ENCODE measurements at regions of chr14 and their contacts with region 1.

Region 1: GRCh38 chr14:68210729-68211299 is 391.2 kb downstream of the RAD51B start:
- DNase-seq: peak in 8 of 9 donors; percentile 10 to 54 (median 43)
- ATAC-seq: peak; percentile 86
- H3K4me3 ChIP-seq: peak overlapping the region; percentile 59
- H3K4me3 Mint-ChIP-seq: peak overlapping the region; percentile 75 to 90 (median 88)
- H3K27ac ChIP-seq: peak overlapping the region; percentile 23
- H3K27ac Mint-ChIP-seq: peak overlapping the region; percentile 71 to 94 (median 87)
- H3K4me1 ChIP-seq: peaks cover 28 to 33% of the 10 kb centered on the region in 2 donors
- H3K4me1 Mint-ChIP-seq: peaks cover 31 to 50% (median 38%) of the 10 kb centered on the region in 7 donors
- H3K27me3 ChIP-seq: no peaks in the 10 kb centered on the region
- H3K27me3 Mint-ChIP-seq: peaks cover 0 to 2% (median 0%) of the 10 kb centered on the region in 5 donors

Region 2: DNA sequence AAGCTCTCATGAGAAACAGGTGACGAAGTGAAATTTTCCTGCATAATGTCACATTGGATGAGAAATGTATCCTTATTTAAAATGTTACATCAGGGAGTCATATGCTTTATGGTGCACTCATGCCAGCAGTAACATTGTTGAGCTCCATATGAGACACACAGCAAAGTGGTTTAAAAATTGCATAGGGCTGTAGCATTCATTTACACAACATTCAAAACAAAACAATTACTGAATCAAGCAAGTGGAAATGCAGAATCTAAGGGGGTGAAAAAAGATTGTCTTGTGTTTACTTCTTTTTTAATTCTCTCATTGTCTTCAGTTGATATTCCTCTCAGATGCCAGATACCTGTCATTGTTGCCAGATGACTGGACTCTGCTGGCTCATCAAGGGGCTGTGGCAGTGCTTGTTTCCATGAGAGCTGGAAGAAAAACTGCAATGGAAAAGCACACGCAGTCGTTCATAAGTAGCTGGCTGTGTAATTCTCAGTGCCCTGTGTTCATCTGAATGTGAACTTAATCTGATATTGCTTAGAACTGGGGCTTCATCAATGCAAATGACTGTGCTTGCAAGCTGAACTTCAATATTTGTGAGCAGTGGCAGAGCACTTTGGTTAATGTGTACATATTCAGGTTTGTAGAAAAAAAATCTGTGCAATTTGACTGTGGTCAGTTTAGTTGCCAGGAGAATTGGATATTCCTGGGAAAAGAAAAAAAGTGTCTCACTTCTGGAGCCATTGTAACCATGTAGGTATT is 85.7 kb before region 1 on chr14:
- CTCF ChIA-PET with region 1: no interaction called
- POLR2A ChIA-PET with region 1: no interaction called
- intact Hi-C with region 1: no loop called
- DNase-seq: no peak
- ATAC-seq: no peak
- H3K4me3 ChIP-seq: no peak overlapping the region
- H3K4me3 Mint-ChIP-seq: no peak overlapping the region
- H3K27ac ChIP-seq: no peak overlapping the region
- H3K27ac Mint-ChIP-seq: no peak overlapping the region
- H3K4me1 ChIP-seq: no peaks in the 10 kb centered on the region
- H3K4me1 Mint-ChIP-seq: no peaks in the 10 kb centered on the region
- H3K27me3 ChIP-seq: no peaks in the 10 kb centered on the region
- H3K27me3 Mint-ChIP-seq: no peaks in the 10 kb centered on the region

Region 3: DNA sequence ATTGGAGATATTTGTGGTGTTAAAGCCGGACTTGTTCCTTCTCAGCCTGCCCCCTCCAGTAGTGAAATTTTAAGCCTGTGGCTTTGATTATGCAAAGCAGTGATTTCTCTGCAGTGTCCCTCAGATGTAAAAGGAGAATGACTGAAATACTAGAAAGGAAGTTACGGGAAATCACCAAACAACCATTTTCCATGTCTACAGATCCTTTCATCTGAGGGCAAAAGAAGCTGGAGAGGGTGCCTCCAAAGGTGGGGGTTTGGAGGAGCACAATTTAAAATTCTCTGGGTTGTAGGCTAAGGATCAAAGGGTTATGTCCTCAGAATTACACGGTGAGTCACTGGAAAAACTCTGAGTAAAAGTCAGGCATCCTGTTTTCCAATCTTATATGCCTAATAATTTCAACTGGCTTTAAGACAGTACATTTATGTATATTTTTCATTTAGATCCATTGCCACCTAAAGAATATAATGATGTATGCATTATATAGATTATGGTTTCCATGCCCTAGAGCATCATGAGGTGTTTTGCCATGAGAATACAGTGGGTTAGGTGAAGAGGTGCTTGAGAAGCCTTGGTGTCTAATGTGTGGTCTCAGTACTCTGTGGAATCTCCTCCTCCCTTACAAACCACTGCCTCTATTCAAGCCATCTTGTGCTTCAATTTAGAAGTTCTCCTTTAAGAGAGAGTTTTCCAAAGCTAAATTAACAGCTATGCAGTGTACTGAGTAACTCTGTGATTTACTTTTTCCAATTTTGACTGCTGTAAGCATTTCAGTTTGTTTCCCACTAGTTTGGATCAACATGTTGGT is 29.1 kb before region 1 on chr14:
- CTCF ChIA-PET with region 1: no interaction called
- POLR2A ChIA-PET with region 1: no interaction called
- intact Hi-C with region 1: loop called in 1 of 2 experiments (anchors 1 kb)
- DNase-seq: no peak
- ATAC-seq: no peak
- H3K4me3 ChIP-seq: no peak overlapping the region
- H3K4me3 Mint-ChIP-seq: no peak overlapping the region
- H3K27ac ChIP-seq: no peak overlapping the region
- H3K27ac Mint-ChIP-seq: peak overlapping the region in 2 of 9 donors; percentile 1 to 44
- H3K4me1 ChIP-seq: peaks cover 0 to 4% of the 10 kb centered on the region in 2 donors
- H3K4me1 Mint-ChIP-seq: peaks cover 8 to 33% (median 26%) of the 10 kb centered on the region in 7 donors
- H3K27me3 ChIP-seq: no peaks in the 10 kb centered on the region
- H3K27me3 Mint-ChIP-seq: no peaks in the 10 kb centered on the region

Region 4: DNA sequence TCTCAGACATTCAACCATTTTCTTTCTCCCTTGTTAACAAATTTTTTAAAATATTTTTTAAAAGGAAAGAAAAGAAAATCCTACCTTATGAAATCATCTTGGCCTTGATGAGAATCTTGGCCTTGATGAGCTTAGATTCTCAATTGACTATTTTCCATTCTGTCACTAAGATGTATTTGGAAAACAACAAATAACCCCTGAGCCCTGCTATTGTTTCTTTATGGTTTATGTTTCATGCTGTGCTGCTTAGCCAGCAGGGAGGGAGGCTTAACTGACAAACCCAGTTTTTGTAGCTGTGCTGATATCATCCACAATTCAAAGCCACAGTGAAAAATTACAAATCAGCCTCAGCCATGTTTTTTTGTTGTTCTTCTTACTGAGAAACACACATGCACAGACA is 12.8 kb after region 1 on chr14:
- CTCF ChIA-PET with region 1: no interaction called
- POLR2A ChIA-PET with region 1: interaction called, 4 read pairs
- intact Hi-C with region 1: loop called in 1 of 2 experiments (anchors 2 kb)
- DNase-seq: no peak
- ATAC-seq: no peak
- H3K4me3 ChIP-seq: no peak overlapping the region
- H3K4me3 Mint-ChIP-seq: peak overlapping the region in 5 of 10 donors; percentile 5 to 47 (median 23)
- H3K27ac ChIP-seq: no peak overlapping the region
- H3K27ac Mint-ChIP-seq: peak overlapping the region in 3 of 9 donors; percentile 4 to 36 (median 23)
- H3K4me1 ChIP-seq: no peaks in the 10 kb centered on the region
- H3K4me1 Mint-ChIP-seq: peaks cover 0 to 20% (median 12%) of the 10 kb centered on the region in 7 donors
- H3K27me3 ChIP-seq: no peaks in the 10 kb centered on the region
- H3K27me3 Mint-ChIP-seq: no peaks in the 10 kb centered on the region

Measured in naive thymus-derived CD4-positive, alpha-beta T cell (primary cell).